AG04449 (cell line): ENCODE measurements at regions of chr1 and their contacts with region 1.

Region 1: DNA sequence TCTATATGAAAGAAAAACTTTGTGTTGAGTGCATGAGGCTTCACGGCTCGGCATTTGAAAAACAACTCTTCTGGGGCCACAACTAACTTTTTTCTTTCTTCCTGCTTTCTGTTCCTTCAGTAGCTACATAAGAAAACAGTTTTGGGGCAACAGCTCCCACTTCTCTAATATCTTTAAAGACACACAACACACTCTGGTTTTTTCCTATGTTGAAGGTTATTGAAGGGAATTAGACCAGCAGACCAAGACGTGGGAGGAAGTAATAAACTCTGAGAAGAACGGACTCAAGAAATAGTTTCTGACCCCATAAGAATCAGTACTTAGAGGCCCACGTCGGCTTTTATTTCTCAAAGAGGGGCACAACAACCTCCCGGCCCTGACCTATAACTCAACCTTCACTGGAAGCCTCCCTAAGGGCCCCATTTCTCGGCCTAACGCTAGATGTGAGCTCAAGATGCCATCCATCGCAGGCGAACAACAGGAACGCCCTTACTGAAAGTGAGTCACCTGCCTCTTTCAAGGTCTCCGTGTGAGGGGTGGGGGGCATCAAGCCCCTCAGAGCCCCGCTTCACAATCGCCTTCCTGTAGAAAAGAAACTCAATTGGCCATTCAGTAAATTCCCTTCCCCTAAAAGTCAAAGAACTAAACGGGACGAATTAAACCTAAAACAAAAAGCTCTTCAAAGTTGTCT is 844 bp downstream of the ZMYM6 start:
- DNase-seq: no peak
- H3K4me3 ChIP-seq: peak overlapping the region; percentile 91
- CTCF ChIP-seq: no peak

Region 2: GRCh38 chr1:34984793-34985608 is 45.9 kb before region 1 on chr1 and contains the start of gene TMEM35B:
- CTCF ChIA-PET with region 1: interaction called, 3 read pairs
- POLR2A ChIA-PET with region 1: interaction called, 12 read pairs
- DNase-seq: no peak
- H3K4me3 ChIP-seq: peak within 1 kb of the TSS; percentile 77
- CTCF ChIP-seq: peak; percentile 24

Region 3: DNA sequence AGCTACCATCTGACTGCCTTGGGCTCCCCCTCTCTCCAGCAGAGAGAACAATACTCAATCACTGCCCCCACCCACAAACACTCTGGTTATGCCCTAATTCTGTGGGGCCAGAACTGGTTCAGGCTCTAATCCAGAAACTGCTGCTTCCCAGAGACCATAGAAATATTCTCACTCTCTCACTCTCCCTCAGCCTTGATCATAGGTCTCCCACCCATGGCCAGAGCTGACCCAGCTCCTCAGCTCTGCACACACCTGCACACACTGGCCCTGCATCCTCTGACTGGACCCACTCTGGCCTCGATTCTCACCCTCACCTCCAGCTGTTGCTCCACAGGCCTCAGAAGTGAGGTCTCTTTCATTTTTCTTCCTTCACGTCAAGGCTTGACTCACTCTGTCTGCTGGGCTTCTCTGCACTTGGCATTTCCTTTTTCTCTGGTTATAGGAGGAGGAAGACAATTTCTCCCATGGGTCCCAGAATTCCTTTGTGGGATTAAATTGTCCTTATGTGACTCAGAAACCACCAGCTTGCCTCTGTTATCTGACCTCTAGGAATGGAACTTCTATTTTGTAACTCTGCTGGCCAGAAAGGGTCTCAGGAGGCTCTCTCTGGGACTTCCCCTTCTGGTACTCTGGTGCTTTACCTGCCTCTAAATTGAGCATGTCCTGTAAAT is 16.4 kb after region 1 on chr1:
- CTCF ChIA-PET with region 1: interaction called, 6 read pairs
- POLR2A ChIA-PET with region 1: interaction called, 17 read pairs
- DNase-seq: peak; percentile 91
- H3K4me3 ChIP-seq: no peak overlapping the region; the same call in 1 of the 2 replicates
- CTCF ChIP-seq: no peak